Gastrocnemius medialis (tissue), 4 donors: ENCODE measurements at regions of chr9 and their contacts with region 1.

Region 1: GRCh38 chr9:34328987-34329832 is at the starts of genes KIF24 and NUDT2:
- DNase-seq: peak; percentile 98 to 99
- ATAC-seq: peak; percentile 98
- H3K4me3 ChIP-seq: peak within 1 kb of the TSS; percentile 65 to 83 (median 76)
- H3K27ac ChIP-seq: peak within 1 kb of the TSS; percentile 87 to 94 (median 91)
- H3K4me1 ChIP-seq: peaks cover 19 to 21% of the 10 kb centered on the region in 2 donors
- H3K27me3 ChIP-seq: no peaks in the 10 kb centered on the region
- CTCF ChIP-seq: peak in 1 of 5 experiments; percentile 8
- POLR2A ChIP-seq: peak; percentile 49 to 90
- total RNA-seq, gene KIF24: 0.13 to 0.68 (median 0.50) TPM
- total RNA-seq, gene NUDT2: 8.2 to 19.9 (median 16.1) TPM

Region 2: GRCh38 chr9:34126207-34127034 is 202.8 kb before region 1 on chr9 and contains the start of gene DCAF12:
- in situ Hi-C with region 1: loop called in 1 of 4 experiments (anchors 10 kb)
- intact Hi-C with region 1: no loop called
- DNase-seq: peak; percentile 81 to 86
- ATAC-seq: peak; percentile 96 to 98
- H3K4me3 ChIP-seq: peak within 1 kb of the TSS; percentile 69 to 99 (median 84)
- H3K27ac ChIP-seq: peak within 1 kb of the TSS; percentile 84 to 98 (median 90)
- H3K4me1 ChIP-seq: peaks cover 30 to 31% of the 10 kb centered on the region in 2 donors
- H3K27me3 ChIP-seq: no peaks in the 10 kb centered on the region
- CTCF ChIP-seq: peak in 1 of 5 experiments; percentile 23
- POLR2A ChIP-seq: peak; percentile 66 to 80
- total RNA-seq, gene DCAF12: 19.4 to 33.7 (median 26.7) TPM

Region 3: GRCh38 chr9:34178520-34179212 is 150.5 kb before region 1 on chr9 and contains the start of gene UBAP1:
- in situ Hi-C with region 1: no loop called
- intact Hi-C with region 1: loop called (anchors 5 kb)
- DNase-seq: peak; percentile 96 to 97
- ATAC-seq: peak; percentile 95 to 97
- H3K4me3 ChIP-seq: peak within 1 kb of the TSS; percentile 73 to 98 (median 90)
- H3K27ac ChIP-seq: peak within 1 kb of the TSS; percentile 93 to 99 (median 96)
- H3K4me1 ChIP-seq: peaks cover 9 to 17% of the 10 kb centered on the region in 2 donors
- H3K27me3 ChIP-seq: no peaks in the 10 kb centered on the region
- CTCF ChIP-seq: no peak
- POLR2A ChIP-seq: peak; percentile 90 to 97
- total RNA-seq, gene UBAP1: 69.5 to 162 (median 90.8) TPM

Region 4: GRCh38 chr9:34376596-34377403 is 47.6 kb after region 1 on chr9 and contains the start of gene MYORG:
- in situ Hi-C with region 1: loop called in 1 of 4 experiments (anchors 5 kb)
- intact Hi-C with region 1: loop called (anchors 1 kb)
- DNase-seq: peak; percentile 95 to 98
- ATAC-seq: peak; percentile 64 to 66
- H3K4me3 ChIP-seq: peak within 1 kb of the TSS; percentile 72 to 85 (median 78)
- H3K27ac ChIP-seq: peak within 1 kb of the TSS; percentile 89 to 93 (median 92)
- H3K4me1 ChIP-seq: peaks cover 31 to 48% of the 10 kb centered on the region in 2 donors
- H3K27me3 ChIP-seq: no peaks in the 10 kb centered on the region
- CTCF ChIP-seq: peak in 1 of 5 experiments; percentile 4
- POLR2A ChIP-seq: peak; percentile 78 to 94
- total RNA-seq, gene MYORG: 8.6 to 149 (median 49.5) TPM

Region 5: GRCh38 chr9:34500623-34501267 is 171.5 kb after region 1 on chr9:
- in situ Hi-C with region 1: no loop called
- intact Hi-C with region 1: loop called (anchors 5 kb)
- DNase-seq: peak; percentile 27 to 53
- ATAC-seq: peak; percentile 61 to 82
- H3K4me3 ChIP-seq: no peak overlapping the region
- H3K27ac ChIP-seq: no peak overlapping the region
- H3K4me1 ChIP-seq: no peaks in the 10 kb centered on the region
- H3K27me3 ChIP-seq: no peaks in the 10 kb centered on the region
- CTCF ChIP-seq: peak; percentile 90 to 98 (median 97)
- POLR2A ChIP-seq: no peak

Region 6: GRCh38 chr9:34591248-34591916 is 262.2 kb after region 1 on chr9:
- in situ Hi-C with region 1: no loop called
- intact Hi-C with region 1: loop called (anchors 2 kb)
- DNase-seq: peak; percentile 84 to 87
- ATAC-seq: peak; percentile 37 to 42
- H3K4me3 ChIP-seq: peak overlapping the region; percentile 49 to 82 (median 68)
- H3K27ac ChIP-seq: peak overlapping the region; percentile 82 to 93 (median 86)
- H3K4me1 ChIP-seq: peaks cover 58 to 66% of the 10 kb centered on the region in 2 donors
- H3K27me3 ChIP-seq: no peaks in the 10 kb centered on the region
- CTCF ChIP-seq: peak; percentile 94 to 98 (median 97)
- POLR2A ChIP-seq: no peak